ENCODE measurements at regions of chr6 and their contacts with region 1.

Region 1: GRCh38 chr6:138765896-138766655 is 7.5 kb upstream of the CCDC28A start:
- DNase-seq: no peak
- H3K4me3 ChIP-seq: no peak overlapping the region
- H3K27ac ChIP-seq: no peak overlapping the region
- H3K4me1 ChIP-seq: peaks cover 0 to 15% (median 0%) of the 10 kb centered on the region in 6 donors
- H3K27me3 ChIP-seq: no peaks in the 10 kb centered on the region
- CTCF ChIP-seq: peak; percentile 43 to 80 (median 71)
- POLR2A ChIP-seq: no peak

Region 2: DNA sequence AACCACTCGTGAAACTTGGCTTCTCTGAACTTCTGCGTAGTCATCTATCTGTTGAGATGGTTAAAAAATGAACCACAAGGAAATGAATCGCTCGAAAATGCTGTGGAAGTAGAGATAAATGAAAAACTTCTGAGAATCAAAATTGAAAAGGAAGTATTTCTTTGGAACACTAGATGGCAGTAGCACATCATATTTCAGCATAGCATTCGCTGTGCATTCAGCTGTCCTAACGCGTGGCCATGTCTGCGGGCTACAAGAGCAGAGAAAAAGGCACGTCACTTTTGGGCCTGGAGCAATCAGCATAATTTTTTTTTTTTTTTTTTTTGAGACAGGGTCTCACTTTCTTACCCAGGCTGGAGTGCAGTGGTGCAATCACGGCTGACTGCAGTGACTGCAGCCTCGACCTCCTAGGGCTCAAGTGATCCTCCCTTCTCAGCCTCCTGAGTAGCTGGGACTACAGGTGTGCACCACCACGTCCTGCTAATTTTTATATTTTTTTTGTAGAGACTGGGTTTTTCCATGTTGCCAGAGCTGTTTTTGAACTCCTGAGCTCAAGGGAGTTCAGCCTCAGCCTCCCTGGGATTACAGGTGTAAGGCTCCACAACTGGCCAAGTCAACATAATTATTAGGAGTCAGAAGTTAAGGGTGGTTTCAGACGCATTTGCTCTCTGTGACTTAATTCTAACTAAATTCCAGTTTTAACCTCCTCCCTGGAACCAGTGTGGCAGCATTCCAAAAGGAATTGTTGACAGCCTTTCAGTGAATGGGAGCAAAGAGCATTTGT is 650.0 kb before region 1 on chr6:
- intact Hi-C with region 1: loop called (anchors 10 kb)
- DNase-seq: peak; percentile 83
- H3K4me3 ChIP-seq: no peak overlapping the region
- H3K27ac ChIP-seq: no peak overlapping the region
- H3K4me1 ChIP-seq: peaks cover 0 to 10% (median 2%) of the 10 kb centered on the region in 6 donors
- H3K27me3 ChIP-seq: peaks cover 0 to 24% (median 0%) of the 10 kb centered on the region in 7 donors
- CTCF ChIP-seq: peak; percentile 40 to 82 (median 70)
- POLR2A ChIP-seq: no peak

Region 3: DNA sequence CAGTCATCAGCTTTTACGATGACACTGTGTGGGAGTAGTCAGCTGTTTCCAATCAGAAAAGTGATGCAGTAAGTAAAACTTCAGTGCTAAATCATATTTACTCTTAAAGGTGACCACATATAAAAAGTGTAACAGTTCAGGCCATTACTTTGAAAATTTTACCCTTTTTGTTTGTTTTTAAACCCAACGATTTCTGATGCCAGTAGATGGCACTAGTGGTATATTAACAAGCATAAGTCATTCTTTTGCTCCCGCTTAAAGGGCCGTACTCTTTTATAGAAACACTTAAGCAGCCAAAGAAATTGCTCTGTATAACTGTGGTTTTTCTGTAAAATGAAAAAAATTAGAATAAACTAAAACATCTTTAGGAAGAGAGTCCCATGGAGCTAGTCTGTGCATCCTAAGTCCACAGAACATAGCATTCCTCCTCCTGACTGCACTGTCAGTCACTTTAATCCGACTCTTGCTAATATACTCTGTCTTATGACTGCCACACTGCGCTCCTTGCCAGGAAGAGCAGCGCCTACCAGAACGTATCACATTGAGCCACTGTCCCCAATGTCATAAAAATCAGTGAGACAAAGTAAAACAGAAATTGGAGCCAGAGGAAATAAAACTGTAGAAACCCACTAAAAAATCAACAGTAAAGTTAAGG is 337.0 kb before region 1 on chr6:
- intact Hi-C with region 1: loop called (anchors 10 kb)
- DNase-seq: no peak
- H3K4me3 ChIP-seq: no peak overlapping the region
- H3K27ac ChIP-seq: no peak overlapping the region
- H3K4me1 ChIP-seq: peaks cover 0 to 28% (median 18%) of the 10 kb centered on the region in 6 donors
- H3K27me3 ChIP-seq: peaks cover 0 to 12% (median 0%) of the 10 kb centered on the region in 7 donors
- CTCF ChIP-seq: peak in 10 of 11 experiments; percentile 12 to 62 (median 52)
- POLR2A ChIP-seq: no peak

Region 4: GRCh38 chr6:138588805-138589434 is 177.2 kb before region 1 on chr6:
- intact Hi-C with region 1: loop called (anchors 2 kb)
- DNase-seq: no peak
- H3K4me3 ChIP-seq: no peak overlapping the region
- H3K27ac ChIP-seq: no peak overlapping the region
- H3K4me1 ChIP-seq: peaks cover 11 to 39% (median 25%) of the 10 kb centered on the region in 6 donors
- H3K27me3 ChIP-seq: no peaks in the 10 kb centered on the region
- CTCF ChIP-seq: peak; percentile 83 to 96 (median 92)
- POLR2A ChIP-seq: no peak

Region 5: DNA sequence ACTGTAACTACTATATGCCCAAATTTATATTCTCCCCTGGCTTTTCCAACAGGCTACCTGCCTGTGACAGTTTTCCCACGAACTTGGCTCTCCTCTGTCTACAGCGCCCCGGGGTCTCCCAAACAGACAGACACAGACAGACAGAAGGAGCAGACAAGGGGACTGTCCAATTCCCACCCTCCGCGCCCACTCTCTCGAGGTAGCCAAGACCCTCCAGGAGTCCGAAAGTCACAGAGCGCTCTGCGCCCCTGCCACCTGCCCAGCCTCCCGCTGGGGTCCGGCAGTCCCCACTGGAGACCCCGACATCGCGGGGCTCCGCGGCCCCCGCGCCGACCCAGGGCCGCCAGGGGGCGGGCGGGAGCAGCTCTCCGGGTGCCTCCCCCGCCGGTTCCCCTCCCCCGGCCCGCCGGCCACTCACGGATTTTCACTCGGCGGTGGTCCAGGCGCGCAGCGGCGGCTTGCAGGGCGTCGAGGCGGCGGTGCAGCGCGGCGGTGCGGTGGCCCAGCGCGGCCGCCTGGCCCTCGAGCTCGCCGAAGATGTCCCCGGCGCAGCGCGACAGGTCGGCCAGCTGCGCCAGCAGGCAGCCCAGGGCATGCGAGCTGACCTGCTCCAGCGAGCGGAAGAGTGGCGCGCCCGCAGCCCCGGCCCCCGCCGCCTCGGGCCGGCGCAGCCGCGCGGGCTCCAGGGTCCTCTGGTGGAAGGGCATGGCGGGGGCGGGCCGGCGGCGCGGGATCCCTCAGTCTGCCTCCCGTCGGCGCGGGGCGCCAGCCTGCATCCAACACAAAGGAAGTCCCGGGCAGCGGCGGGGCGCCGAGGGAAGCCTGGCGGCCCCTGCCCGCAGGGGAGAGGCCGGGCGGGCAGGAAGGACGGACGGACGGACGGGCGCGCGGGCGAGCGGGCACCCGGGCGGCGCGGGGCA is 73.8 kb before region 1 on chr6:
- intact Hi-C with region 1: loop called (anchors 10 kb)
- DNase-seq: peak; percentile 91
- H3K4me3 ChIP-seq: peak overlapping the region; percentile 61 to 97 (median 82)
- H3K27ac ChIP-seq: peak overlapping the region; percentile 36 to 87 (median 81)
- H3K4me1 ChIP-seq: peaks cover 4 to 26% (median 19%) of the 10 kb centered on the region in 6 donors
- H3K27me3 ChIP-seq: peaks cover 0 to 38% (median 0%) of the 10 kb centered on the region in 7 donors
- CTCF ChIP-seq: peak in 10 of 11 experiments; percentile 25 to 92 (median 82)
- POLR2A ChIP-seq: no peak

Region 6: GRCh38 chr6:138944412-138944811 is 178.3 kb after region 1 on chr6:
- intact Hi-C with region 1: no loop called
- DNase-seq: no peak
- H3K4me3 ChIP-seq: no peak overlapping the region
- H3K27ac ChIP-seq: no peak overlapping the region
- H3K4me1 ChIP-seq: peaks cover 0 to 40% (median 2%) of the 10 kb centered on the region in 6 donors
- H3K27me3 ChIP-seq: no peaks in the 10 kb centered on the region
- CTCF ChIP-seq: no peak
- POLR2A ChIP-seq: no peak

Region 7: DNA sequence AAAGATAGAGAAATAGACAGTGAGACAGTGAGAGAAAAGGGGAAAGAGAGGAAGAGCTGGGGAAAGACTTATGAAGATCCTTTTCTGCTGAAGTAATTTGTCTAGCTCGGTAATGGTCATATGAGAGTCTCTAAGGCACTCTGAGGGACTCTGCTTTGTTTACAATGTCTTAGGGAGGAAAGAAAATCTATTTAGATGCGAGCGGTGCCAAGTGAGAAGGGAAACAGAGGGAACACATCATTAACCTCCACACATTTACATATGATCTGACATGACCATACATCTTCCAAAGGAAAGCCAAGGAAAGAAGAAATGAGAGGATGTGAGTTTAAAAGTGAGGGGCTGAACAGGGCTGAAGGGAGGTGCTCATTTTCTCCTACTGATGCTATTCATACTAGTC is 1470.7 kb after region 1 on chr6:
- intact Hi-C with region 1: no loop called
- DNase-seq: no peak
- H3K4me3 ChIP-seq: no peak overlapping the region
- H3K27ac ChIP-seq: no peak overlapping the region
- H3K4me1 ChIP-seq: no peaks in the 10 kb centered on the region
- H3K27me3 ChIP-seq: no peaks in the 10 kb centered on the region
- CTCF ChIP-seq: no peak
- POLR2A ChIP-seq: no peak